ENCODE measurements at regions of chr1 and their contacts with region 1.

Region 1: DNA sequence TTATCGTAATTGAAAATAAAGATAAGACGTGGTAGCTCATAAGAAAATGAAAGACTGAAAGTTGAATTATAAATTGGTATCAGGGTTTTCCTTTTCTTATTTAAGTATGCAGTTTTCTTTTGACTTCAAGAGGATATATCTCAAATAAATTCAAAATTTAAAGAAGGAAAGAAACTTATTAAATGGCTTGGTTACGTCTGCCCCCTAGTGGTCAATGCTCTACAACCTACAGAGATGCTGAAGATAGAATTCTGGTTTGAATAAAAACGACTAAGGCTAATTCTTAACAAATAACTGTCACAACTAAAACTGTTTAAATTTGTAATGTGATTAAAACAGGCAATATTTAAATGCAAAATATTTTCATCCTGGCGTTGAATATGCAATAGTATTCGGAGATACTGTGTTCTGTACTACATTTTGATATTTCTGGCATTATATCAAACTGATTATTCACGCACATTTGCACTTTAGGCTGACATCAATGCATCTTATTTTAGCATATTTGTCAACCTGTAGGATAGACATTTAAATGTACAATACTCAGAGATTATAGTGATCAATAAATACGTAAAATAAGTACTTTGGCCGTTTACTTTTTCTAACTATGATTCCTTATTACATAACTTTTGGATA is 26.8 kb downstream of the IFI44 start:
- DNase-seq: peak in 5 of 10 donors; percentile 10 to 44 (median 23)

Region 2: GRCh38 chr1:78145105-78145580 is 531.3 kb before region 1 on chr1:
- intact Hi-C with region 1: loop called (anchors 2 kb)
- DNase-seq: peak in 9 of 10 donors; percentile 23 to 93 (median 48)

Region 3: GRCh38 chr1:78536427-78536826 is 140.0 kb before region 1 on chr1:
- intact Hi-C with region 1: no loop called
- DNase-seq: no peak

Region 4: DNA sequence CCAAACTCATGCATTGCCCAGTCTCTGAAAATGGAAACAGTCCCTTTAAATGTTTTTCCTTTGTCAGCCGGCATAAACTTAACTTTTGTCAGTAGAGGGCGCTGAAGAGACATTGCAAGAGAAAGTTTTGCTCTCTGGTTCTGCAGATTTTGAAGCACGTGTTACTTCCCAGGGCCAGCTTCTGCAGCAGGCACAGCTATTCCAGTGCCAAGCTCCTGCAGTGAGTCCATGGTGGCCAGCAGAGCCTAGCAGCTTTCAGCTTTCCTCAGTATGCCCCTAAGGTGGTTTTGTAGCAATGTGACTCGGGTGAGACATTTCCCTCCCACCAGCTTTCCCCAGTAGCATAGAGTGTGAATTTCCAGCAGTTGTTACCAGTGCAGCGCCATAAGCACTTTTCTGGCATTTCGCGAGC is 58.8 kb before region 1 on chr1:
- intact Hi-C with region 1: loop called (anchors 1 kb)
- DNase-seq: peak in 9 of 10 donors; percentile 30 to 91 (median 53)